ENCODE measurements at regions of chr4 and their contacts with region 1.

Region 1: DNA sequence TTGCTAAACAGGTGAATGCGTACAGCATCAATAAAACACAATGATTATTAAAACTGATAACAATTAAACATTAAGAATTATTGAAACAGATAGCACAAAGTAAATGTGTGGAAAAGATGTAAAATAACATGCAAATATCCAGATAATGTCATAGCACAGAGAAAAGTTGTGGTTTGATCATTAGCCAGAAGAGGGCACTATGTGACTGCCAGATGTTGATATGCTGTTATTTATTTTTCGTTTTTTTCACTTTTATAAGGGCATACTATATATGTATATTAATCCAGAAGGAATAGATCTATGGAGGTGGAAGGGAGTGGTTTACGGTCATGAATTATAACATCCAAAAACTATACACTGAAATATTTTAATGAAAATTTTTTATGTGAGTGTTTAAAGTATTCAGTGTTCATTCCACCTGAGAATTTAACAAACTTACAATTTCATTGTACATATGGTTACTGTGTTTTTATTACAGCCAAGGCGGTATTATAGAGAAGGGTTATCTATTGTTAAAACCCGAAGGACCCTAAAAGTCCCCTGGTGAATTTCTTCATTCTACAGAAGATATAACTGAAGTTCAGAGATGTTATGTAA is 211.9 kb upstream of the UGT8 start:
- DNase-seq: peak; percentile 59
- H3K4me3 ChIP-seq: no peak overlapping the region
- H3K27ac ChIP-seq: no peak overlapping the region
- H3K4me1 ChIP-seq: no peaks in the 10 kb centered on the region
- H3K27me3 ChIP-seq: peaks cover 5 to 11% of the 10 kb centered on the region in 2 experiments
- CTCF ChIP-seq: peak; percentile 37 to 50
- POLR2A ChIP-seq: no peak

Region 2: GRCh38 chr4:113547487-113548042 is 839.2 kb before region 1 on chr4:
- CTCF ChIA-PET with region 1: interaction called, 31 read pairs
- POLR2A ChIA-PET with region 1: no interaction called
- dilution Hi-C with region 1: no loop called
- intact Hi-C with region 1: loop called (anchors 2 kb)
- DNase-seq: peak; percentile 96
- H3K4me3 ChIP-seq: no peak overlapping the region
- H3K27ac ChIP-seq: peak overlapping the region; percentile 4
- H3K4me1 ChIP-seq: peaks cover 3% of the 10 kb centered on the region
- H3K27me3 ChIP-seq: no peaks in the 10 kb centered on the region
- CTCF ChIP-seq: peak; percentile 92 to 98
- POLR2A ChIP-seq: no peak

Region 3: GRCh38 chr4:113952452-113953029 is 434.2 kb before region 1 on chr4:
- CTCF ChIA-PET with region 1: interaction called, 25 read pairs
- POLR2A ChIA-PET with region 1: no interaction called
- dilution Hi-C with region 1: no loop called
- intact Hi-C with region 1: loop called (anchors 1 kb)
- DNase-seq: peak; percentile 78
- H3K4me3 ChIP-seq: no peak overlapping the region
- H3K27ac ChIP-seq: no peak overlapping the region
- H3K4me1 ChIP-seq: peaks cover 20% of the 10 kb centered on the region
- H3K27me3 ChIP-seq: no peaks in the 10 kb centered on the region
- CTCF ChIP-seq: peak; percentile 64 to 72
- POLR2A ChIP-seq: no peak

Region 4: GRCh38 chr4:113979148-113979904 is 407.4 kb before region 1 on chr4 and contains the start of gene ARSJ:
- CTCF ChIA-PET with region 1: no interaction called
- POLR2A ChIA-PET with region 1: no interaction called
- dilution Hi-C with region 1: no loop called
- intact Hi-C with region 1: no loop called
- DNase-seq: peak; percentile 82
- H3K4me3 ChIP-seq: peak within 1 kb of the TSS; percentile 92 to 98 (median 97)
- H3K27ac ChIP-seq: peak within 1 kb of the TSS; percentile 92
- H3K4me1 ChIP-seq: peaks cover 12% of the 10 kb centered on the region
- H3K27me3 ChIP-seq: no peaks in the 10 kb centered on the region
- CTCF ChIP-seq: peak in 1 of 2 donors; percentile 3
- POLR2A ChIP-seq: peak; percentile 86
- total RNA-seq, gene ARSJ: 44.0 and 50.0 TPM in 2 replicates

Region 5: DNA sequence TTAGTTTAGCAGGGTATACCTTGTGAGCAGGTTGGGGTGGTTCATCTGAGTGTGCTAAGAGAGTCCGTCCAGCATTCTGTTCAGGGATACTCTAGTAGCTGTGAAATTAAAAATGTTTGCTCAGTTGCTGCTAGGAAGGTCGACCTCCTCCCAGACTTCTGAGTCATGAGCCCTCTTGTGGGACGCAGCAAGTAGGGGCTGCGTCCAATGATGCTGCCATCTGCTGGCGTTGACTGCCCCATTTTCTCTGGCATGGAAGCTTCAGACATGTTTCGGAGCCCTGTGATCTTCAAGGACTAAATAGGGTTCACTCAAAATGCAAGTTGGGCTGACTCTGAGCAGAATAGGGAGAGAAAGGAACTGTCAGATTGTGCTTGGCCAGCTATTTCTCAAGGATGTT is 206.3 kb before region 1 on chr4:
- CTCF ChIA-PET with region 1: no interaction called
- POLR2A ChIA-PET with region 1: no interaction called
- dilution Hi-C with region 1: no loop called
- intact Hi-C with region 1: loop called (anchors 2 kb)
- DNase-seq: peak; percentile 87
- H3K4me3 ChIP-seq: no peak overlapping the region
- H3K27ac ChIP-seq: no peak overlapping the region
- H3K4me1 ChIP-seq: no peaks in the 10 kb centered on the region
- H3K27me3 ChIP-seq: no peaks in the 10 kb centered on the region
- CTCF ChIP-seq: peak; percentile 69 to 79
- POLR2A ChIP-seq: no peak

Region 6: GRCh38 chr4:114343015-114343414 is 43.7 kb before region 1 on chr4:
- CTCF ChIA-PET with region 1: no interaction called
- POLR2A ChIA-PET with region 1: no interaction called
- dilution Hi-C with region 1: no loop called
- intact Hi-C with region 1: no loop called
- DNase-seq: no peak
- H3K4me3 ChIP-seq: no peak overlapping the region
- H3K27ac ChIP-seq: no peak overlapping the region
- H3K4me1 ChIP-seq: no peaks in the 10 kb centered on the region
- H3K27me3 ChIP-seq: no peaks in the 10 kb centered on the region
- CTCF ChIP-seq: no peak
- POLR2A ChIP-seq: no peak

Region 7: DNA sequence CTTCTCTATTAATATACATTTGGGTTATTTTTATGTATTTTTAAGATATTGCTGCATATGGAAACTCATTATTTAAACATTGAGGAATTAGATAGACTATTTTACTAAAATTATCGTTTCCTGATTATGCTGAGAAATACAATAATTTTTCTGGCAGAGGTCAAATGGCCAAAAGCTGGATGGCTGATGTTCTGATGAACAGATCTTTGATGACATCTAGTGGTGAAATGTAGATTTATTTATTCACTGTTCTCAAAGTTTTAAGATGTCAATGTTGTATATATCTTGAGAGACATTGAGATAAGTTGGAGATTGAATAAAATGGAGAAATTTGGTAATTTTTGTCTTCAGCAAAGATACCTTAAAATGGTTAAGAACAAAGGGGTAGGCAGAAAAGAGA is 308.0 kb after region 1 on chr4:
- CTCF ChIA-PET with region 1: interaction called, 71 read pairs
- POLR2A ChIA-PET with region 1: no interaction called
- dilution Hi-C with region 1: no loop called
- intact Hi-C with region 1: loop called (anchors 1 kb)
- DNase-seq: peak; percentile 58
- H3K4me3 ChIP-seq: no peak overlapping the region
- H3K27ac ChIP-seq: no peak overlapping the region
- H3K4me1 ChIP-seq: peaks cover 4% of the 10 kb centered on the region
- H3K27me3 ChIP-seq: peaks cover 0 to 1% of the 10 kb centered on the region in 2 experiments
- CTCF ChIP-seq: peak; percentile 16
- POLR2A ChIP-seq: no peak

Region 8: GRCh38 chr4:114727466-114727865 is 340.7 kb after region 1 on chr4:
- CTCF ChIA-PET with region 1: no interaction called
- POLR2A ChIA-PET with region 1: no interaction called
- dilution Hi-C with region 1: no loop called
- intact Hi-C with region 1: no loop called
- DNase-seq: no peak
- H3K4me3 ChIP-seq: no peak overlapping the region
- H3K27ac ChIP-seq: no peak overlapping the region
- H3K4me1 ChIP-seq: no peaks in the 10 kb centered on the region
- H3K27me3 ChIP-seq: no peaks in the 10 kb centered on the region
- CTCF ChIP-seq: no peak
- POLR2A ChIP-seq: no peak